ENCODE measurements at regions of chr3 and their contacts with region 1.

Region 1: DNA sequence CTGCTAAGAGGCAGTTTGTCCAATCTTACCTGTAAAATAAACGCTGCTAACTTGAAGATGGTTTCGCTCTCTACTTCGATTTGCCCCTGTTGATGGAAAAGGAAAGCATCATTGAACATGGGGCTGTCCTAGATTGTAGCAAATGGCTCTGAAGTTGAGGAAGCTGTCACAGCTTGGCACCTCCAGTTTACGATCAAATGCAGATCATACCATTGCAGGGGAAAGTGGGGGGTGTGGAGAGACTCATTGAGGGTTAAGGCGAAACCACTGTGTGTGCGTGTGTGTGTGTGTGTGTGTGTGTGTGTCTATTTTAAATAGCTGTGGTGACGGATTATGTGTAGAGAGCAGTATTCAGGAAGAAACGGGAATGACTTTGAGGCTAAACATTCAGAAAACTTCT is 127.6 kb upstream of the LMOD3 start:
- DNase-seq: peak in 7 of 9 donors; percentile 11 to 77 (median 39)
- ATAC-seq: peak; percentile 79
- H3K4me3 ChIP-seq: no peak overlapping the region
- H3K4me3 Mint-ChIP-seq: peak overlapping the region in 8 of 10 donors; percentile 40 to 91 (median 69)
- H3K27ac ChIP-seq: peak overlapping the region; percentile 17
- H3K27ac Mint-ChIP-seq: peak overlapping the region in 8 of 9 donors; percentile 2 to 90 (median 66)
- H3K4me1 ChIP-seq: no peaks in the 10 kb centered on the region
- H3K4me1 Mint-ChIP-seq: peaks cover 0 to 21% (median 13%) of the 10 kb centered on the region in 7 donors
- H3K27me3 ChIP-seq: no peaks in the 10 kb centered on the region
- H3K27me3 Mint-ChIP-seq: peaks cover 0 to 4% (median 0%) of the 10 kb centered on the region in 5 donors

Region 2: DNA sequence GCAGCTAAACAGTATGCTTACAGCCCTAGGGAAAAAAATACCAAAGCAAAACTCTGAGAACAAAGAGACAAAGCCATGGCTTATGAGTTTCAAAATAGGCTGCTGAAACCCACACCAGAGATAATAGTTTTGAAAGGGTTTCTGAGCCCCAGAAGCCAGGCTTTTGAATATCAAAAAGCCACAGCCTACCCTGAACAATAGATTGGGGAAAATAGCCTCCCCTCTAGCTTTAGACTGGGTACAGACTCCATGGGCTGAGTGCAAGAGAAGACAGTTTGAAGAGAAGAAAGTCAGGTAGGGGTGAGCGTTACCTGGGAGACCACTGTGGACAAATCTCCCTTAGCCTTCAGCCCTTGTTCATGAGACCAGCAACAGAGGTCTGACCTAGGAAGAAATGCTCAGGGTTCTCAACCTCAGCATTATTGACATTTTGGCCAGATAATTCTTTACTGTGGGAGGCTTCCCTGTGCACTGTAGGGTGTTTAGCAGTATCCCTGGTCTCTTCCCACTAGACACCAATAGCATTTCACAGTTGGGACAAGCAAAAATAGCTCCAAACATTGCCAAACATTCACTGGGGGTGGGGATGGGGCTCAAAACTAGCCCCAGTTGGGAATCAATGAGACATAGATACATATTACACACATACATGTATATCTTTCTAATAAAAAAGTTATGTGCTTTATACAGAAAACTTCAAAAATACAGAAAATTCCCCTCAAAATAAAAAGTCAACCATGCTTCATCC is 306.1 kb before region 1 on chr3:
- CTCF ChIA-PET with region 1: no interaction called
- POLR2A ChIA-PET with region 1: no interaction called
- intact Hi-C with region 1: no loop called
- DNase-seq: no peak
- ATAC-seq: no peak
- H3K4me3 ChIP-seq: no peak overlapping the region
- H3K4me3 Mint-ChIP-seq: no peak overlapping the region
- H3K27ac ChIP-seq: no peak overlapping the region
- H3K27ac Mint-ChIP-seq: no peak overlapping the region
- H3K4me1 ChIP-seq: no peaks in the 10 kb centered on the region
- H3K4me1 Mint-ChIP-seq: no peaks in the 10 kb centered on the region
- H3K27me3 ChIP-seq: no peaks in the 10 kb centered on the region
- H3K27me3 Mint-ChIP-seq: peaks cover 15 to 45% (median 30%) of the 10 kb centered on the region in 5 donors

Region 3: GRCh38 chr3:69174871-69175737 is 74.9 kb before region 1 on chr3:
- CTCF ChIA-PET with region 1: no interaction called
- POLR2A ChIA-PET with region 1: interaction called, 4 read pairs
- intact Hi-C with region 1: loop called in 1 of 2 experiments (anchors 5 kb)
- DNase-seq: no peak
- ATAC-seq: no peak
- H3K4me3 ChIP-seq: no peak overlapping the region
- H3K4me3 Mint-ChIP-seq: no peak overlapping the region
- H3K27ac ChIP-seq: no peak overlapping the region
- H3K27ac Mint-ChIP-seq: peak overlapping the region in 1 of 9 donors; percentile 25
- H3K4me1 ChIP-seq: no peaks in the 10 kb centered on the region
- H3K4me1 Mint-ChIP-seq: peaks cover 0 to 28% (median 0%) of the 10 kb centered on the region in 7 donors
- H3K27me3 ChIP-seq: no peaks in the 10 kb centered on the region
- H3K27me3 Mint-ChIP-seq: no peaks in the 10 kb centered on the region

Region 4: DNA sequence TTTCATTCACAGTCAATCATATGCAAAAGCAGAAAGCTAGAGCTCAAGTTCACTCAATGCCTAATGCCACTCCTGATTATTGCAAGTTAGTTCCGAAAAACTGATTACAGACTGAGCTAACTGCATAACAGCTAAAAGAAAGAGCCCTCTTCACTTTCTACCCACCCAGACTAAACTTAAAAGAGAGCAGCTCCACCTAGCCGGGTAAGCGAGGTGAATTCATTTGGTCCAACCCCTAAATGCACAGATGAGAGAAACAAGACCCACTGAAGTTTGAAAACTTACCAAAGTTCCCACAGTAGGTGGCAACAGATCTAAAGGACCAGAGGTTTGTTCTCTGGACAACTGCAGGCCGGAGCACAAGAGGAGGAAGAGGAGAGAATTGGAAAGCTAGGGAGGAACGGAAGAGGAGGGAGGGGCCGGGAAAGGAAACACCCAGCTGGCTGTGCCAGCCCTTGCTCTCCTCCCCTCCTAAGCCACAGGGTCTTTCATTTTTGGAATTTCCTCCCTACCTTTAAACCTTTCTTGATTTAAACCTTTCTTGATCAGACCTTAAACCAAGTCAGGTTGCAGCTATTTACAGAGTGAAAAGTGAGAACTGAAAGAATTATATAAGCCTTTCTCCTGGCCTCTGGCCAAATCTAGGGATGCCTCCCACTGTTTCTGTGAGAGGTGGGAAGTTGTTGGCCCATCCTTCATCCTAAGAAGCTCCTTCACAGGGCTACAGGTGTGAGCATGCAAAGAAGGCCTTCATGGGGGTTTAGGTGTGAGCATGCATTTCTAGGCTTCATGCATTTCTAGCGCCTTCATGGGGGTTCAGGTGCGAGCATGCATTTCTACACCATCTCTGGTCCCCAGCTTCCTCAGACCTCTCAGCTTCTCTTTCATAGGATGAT is 13.0 kb before region 1 on chr3:
- CTCF ChIA-PET with region 1: interaction called, 4 read pairs
- POLR2A ChIA-PET with region 1: no interaction called
- intact Hi-C with region 1: loop called in 1 of 2 experiments (anchors 2 kb)
- DNase-seq: peak in 1 of 9 donors; percentile 5
- ATAC-seq: no peak
- H3K4me3 ChIP-seq: no peak overlapping the region
- H3K4me3 Mint-ChIP-seq: peak overlapping the region in 8 of 10 donors; percentile 58 to 78 (median 68)
- H3K27ac ChIP-seq: no peak overlapping the region
- H3K27ac Mint-ChIP-seq: peak overlapping the region in 8 of 9 donors; percentile 1 to 80 (median 42)
- H3K4me1 ChIP-seq: peaks cover 5 to 17% of the 10 kb centered on the region in 2 donors
- H3K4me1 Mint-ChIP-seq: peaks cover 9 to 33% (median 19%) of the 10 kb centered on the region in 7 donors
- H3K27me3 ChIP-seq: no peaks in the 10 kb centered on the region
- H3K27me3 Mint-ChIP-seq: no peaks in the 10 kb centered on the region